B cell (primary cell): ENCODE measurements at regions of chr5 and their contacts with region 1.

Region 1: DNA sequence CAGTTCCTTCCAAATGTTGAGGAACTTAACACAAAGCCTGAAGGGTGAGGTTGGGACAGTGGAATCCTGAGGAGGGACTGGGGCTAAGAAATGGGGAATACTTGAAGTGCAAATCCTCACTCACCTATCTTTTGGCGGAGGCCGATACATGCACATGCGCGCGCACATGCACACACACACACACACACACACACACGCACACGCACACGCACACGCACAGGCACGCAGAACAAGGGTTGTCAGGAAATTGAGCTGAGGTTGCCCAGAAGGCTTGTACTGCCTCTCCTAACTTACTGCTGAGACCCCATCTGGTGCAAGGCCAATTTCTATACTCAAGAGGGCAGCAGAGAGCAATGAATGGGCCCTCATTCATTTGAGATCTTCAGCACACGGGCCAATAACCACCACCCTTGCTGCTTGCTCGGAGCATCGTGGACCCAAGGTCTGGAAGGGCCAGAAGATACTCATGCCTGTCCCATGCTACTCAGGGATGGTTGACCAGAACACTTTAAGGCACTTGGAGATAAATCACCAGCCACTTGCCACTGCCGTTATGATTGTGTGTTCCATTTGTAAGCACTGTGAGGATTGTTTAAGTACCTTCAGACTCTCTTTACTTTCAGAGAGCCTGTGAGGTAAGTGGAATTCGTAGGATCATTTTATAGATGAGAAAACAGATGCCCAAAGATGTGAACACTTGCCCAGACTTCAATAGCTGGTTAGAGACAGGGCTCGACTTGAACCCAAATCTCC is 21.5 kb downstream of the BTF3 start:
- DNase-seq: peak; percentile 81
- ATAC-seq: peak; percentile 95
- H3K4me3 ChIP-seq: no peak overlapping the region
- H3K4me3 Mint-ChIP-seq: peak overlapping the region; percentile 20
- H3K27ac ChIP-seq: no peak overlapping the region
- H3K27ac Mint-ChIP-seq: no peak overlapping the region
- H3K4me1 ChIP-seq: peaks cover 0 to 4% of the 10 kb centered on the region in 2 donors
- H3K4me1 Mint-ChIP-seq: peaks cover 7% of the 10 kb centered on the region
- H3K27me3 ChIP-seq: no peaks in the 10 kb centered on the region
- H3K27me3 Mint-ChIP-seq: no peaks in the 10 kb centered on the region
- CTCF ChIP-seq: peak; percentile 78

Region 2: DNA sequence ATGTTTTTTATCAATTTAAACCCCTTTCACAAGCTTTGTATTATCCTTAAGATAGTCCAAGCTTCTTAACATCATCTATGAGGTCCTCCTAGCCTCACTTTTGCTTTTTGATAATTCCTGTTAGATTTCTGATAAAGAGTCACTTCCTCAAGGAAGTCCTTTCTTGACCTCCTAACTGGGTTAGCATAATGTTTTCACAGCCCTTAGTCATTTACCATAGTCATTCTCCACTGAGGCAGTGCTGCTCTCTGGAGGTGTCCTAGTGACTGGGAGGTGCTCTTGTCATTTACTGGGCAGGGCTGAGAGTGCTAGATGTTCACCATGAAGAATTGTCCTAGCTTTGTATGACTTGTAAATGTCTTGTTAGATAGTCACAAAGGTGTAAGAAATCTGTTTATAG is 676.9 kb before region 1 on chr5:
- CTCF ChIA-PET with region 1: no interaction called
- POLR2A ChIA-PET with region 1: no interaction called
- intact Hi-C with region 1: no loop called
- DNase-seq: no peak
- ATAC-seq: no peak
- H3K4me3 ChIP-seq: no peak overlapping the region
- H3K4me3 Mint-ChIP-seq: no peak overlapping the region
- H3K27ac ChIP-seq: no peak overlapping the region
- H3K27ac Mint-ChIP-seq: no peak overlapping the region
- H3K4me1 ChIP-seq: peaks cover 4 to 15% of the 10 kb centered on the region in 2 donors
- H3K4me1 Mint-ChIP-seq: peaks cover 31% of the 10 kb centered on the region
- H3K27me3 ChIP-seq: no peaks in the 10 kb centered on the region
- H3K27me3 Mint-ChIP-seq: no peaks in the 10 kb centered on the region
- CTCF ChIP-seq: no peak

Region 3: DNA sequence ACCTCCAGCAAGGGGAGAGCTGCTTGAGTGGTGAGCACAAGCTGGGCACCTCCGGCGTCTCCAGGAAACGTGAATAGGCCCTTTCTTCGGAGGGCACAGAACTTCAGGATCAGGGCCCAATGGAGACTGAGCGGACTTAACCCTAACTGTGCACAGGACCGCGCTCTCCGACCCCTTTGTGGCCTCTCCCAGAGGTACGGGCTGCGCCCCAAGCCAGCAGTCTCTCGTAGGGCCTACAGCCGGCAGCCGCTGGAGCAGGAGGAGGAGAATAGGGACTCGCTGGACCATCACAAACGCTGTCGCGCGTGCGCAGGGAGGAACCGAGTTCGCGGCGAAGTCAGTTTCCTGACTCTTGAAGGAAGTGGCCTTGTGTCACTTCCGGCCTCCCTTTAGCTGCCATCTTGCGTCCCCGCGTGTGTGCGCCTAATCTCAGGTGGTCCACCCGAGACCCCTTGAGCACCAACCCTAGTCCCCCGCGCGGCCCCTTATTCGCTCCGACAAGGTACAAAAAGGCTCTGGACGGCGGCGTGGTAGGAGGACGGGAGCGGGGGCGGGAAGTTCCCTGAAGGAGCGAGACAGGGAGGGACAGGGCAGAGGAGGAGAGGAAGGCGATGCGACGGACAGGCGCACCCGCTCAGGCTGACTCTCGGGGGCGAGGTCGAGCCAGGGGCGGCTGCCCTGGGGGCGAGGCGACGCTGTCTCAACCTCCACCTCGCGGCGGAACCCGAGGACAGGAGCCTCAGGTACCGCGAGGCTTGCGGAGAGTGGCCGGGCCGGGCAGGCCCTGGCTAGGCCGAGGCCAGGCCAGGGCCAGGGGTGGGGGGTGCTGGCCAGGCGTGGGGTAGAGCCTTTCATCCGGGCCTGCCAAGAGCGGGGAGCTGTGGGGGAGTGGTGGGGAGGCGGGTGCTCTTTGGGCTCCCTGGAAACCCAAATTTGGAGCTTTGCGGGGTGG is 21.4 kb before region 1 on chr5 and contains the start of gene BTF3:
- CTCF ChIA-PET with region 1: interaction called, 3 read pairs
- POLR2A ChIA-PET with region 1: no interaction called
- intact Hi-C with region 1: loop called (anchors 1 kb)
- DNase-seq: peak; percentile 96
- ATAC-seq: peak; percentile 95
- H3K4me3 ChIP-seq: peak within 1 kb of the TSS; percentile 60 to 98 (median 97)
- H3K4me3 Mint-ChIP-seq: peak within 1 kb of the TSS; percentile 99
- H3K27ac ChIP-seq: peak within 1 kb of the TSS; percentile 96 to 99
- H3K27ac Mint-ChIP-seq: peak within 1 kb of the TSS; percentile 99
- H3K4me1 ChIP-seq: peaks cover 19 to 33% of the 10 kb centered on the region in 2 donors
- H3K4me1 Mint-ChIP-seq: peaks cover 37% of the 10 kb centered on the region
- H3K27me3 ChIP-seq: no peaks in the 10 kb centered on the region
- H3K27me3 Mint-ChIP-seq: peaks cover 13% of the 10 kb centered on the region
- CTCF ChIP-seq: no peak
- total RNA-seq, gene BTF3: 452 and 466 TPM in 2 replicates

Region 4: GRCh38 chr5:73507062-73507461 is 12.6 kb before region 1 on chr5:
- CTCF ChIA-PET with region 1: interaction called, 39 read pairs
- POLR2A ChIA-PET with region 1: no interaction called
- intact Hi-C with region 1: no loop called
- DNase-seq: no peak
- ATAC-seq: no peak
- H3K4me3 ChIP-seq: no peak overlapping the region
- H3K4me3 Mint-ChIP-seq: no peak overlapping the region
- H3K27ac ChIP-seq: no peak overlapping the region
- H3K27ac Mint-ChIP-seq: peak overlapping the region; percentile 27
- H3K4me1 ChIP-seq: no peaks in the 10 kb centered on the region
- H3K4me1 Mint-ChIP-seq: peaks cover 4% of the 10 kb centered on the region
- H3K27me3 ChIP-seq: no peaks in the 10 kb centered on the region
- H3K27me3 Mint-ChIP-seq: no peaks in the 10 kb centered on the region
- CTCF ChIP-seq: no peak

Region 5: DNA sequence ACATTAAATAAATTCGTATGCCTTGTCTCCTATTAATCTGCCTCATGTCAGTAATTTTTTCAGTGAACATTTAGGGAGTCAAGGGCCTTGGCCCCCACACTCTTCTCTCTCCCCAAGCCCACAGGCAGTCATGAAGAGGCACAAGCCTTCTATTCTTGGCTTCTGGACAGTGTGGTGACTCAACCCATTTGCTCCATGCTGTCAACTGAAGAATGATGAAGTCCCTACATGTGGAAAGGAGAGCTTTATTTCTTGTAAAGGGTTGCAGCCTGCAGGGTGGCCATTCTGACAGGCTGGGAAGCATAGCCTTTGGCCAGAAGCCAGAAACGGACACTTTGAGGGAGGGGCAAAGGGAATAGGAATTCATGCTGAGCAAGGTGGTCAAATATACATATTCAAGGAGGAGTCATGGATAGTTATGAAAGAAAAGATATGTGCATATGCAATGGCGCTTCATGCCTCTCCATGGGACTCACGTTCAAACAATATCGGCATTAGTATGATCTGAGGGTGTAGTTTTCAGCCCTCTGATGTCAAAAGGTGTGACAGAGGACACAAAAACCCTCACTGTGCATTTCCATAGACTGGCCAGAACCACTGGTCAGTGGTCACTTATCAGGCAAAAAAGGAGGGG is 14.4 kb after region 1 on chr5:
- CTCF ChIA-PET with region 1: interaction called, 103 read pairs
- POLR2A ChIA-PET with region 1: interaction called, 3 read pairs
- intact Hi-C with region 1: loop called (anchors 1 kb)
- DNase-seq: no peak
- ATAC-seq: no peak
- H3K4me3 ChIP-seq: no peak overlapping the region
- H3K4me3 Mint-ChIP-seq: no peak overlapping the region
- H3K27ac ChIP-seq: no peak overlapping the region
- H3K27ac Mint-ChIP-seq: no peak overlapping the region
- H3K4me1 ChIP-seq: no peaks in the 10 kb centered on the region
- H3K4me1 Mint-ChIP-seq: no peaks in the 10 kb centered on the region
- H3K27me3 ChIP-seq: peaks cover 0 to 5% (median 2%) of the 10 kb centered on the region in 4 experiments
- H3K27me3 Mint-ChIP-seq: peaks cover 30% of the 10 kb centered on the region
- CTCF ChIP-seq: no peak

Region 6: GRCh38 chr5:73540192-73540591 is 20.5 kb after region 1 on chr5:
- CTCF ChIA-PET with region 1: interaction called, 103 read pairs
- POLR2A ChIA-PET with region 1: interaction called, 3 read pairs
- intact Hi-C with region 1: loop called (anchors 1 kb)
- DNase-seq: no peak
- ATAC-seq: no peak
- H3K4me3 ChIP-seq: no peak overlapping the region
- H3K4me3 Mint-ChIP-seq: no peak overlapping the region
- H3K27ac ChIP-seq: no peak overlapping the region
- H3K27ac Mint-ChIP-seq: no peak overlapping the region
- H3K4me1 ChIP-seq: no peaks in the 10 kb centered on the region
- H3K4me1 Mint-ChIP-seq: no peaks in the 10 kb centered on the region
- H3K27me3 ChIP-seq: peaks cover 0 to 6% (median 3%) of the 10 kb centered on the region in 4 experiments
- H3K27me3 Mint-ChIP-seq: peaks cover 31% of the 10 kb centered on the region
- CTCF ChIP-seq: no peak